Activated CD8-positive, alpha-beta T cell treated with anti-CD3 and anti-CD28 coated beads, Interleukin-2, amount 10 ng/mL, durations not matched to agents 7 days and 5 days (primary cell): ENCODE measurements at regions of chr10 and their contacts with region 1.

Region 1: GRCh38 chr10:109773288-109774120 is 149.8 kb downstream of the XPNPEP1 start:
- DNase-seq: no peak
- ATAC-seq: no peak
- H3K4me3 Mint-ChIP-seq: no peak overlapping the region
- H3K27ac Mint-ChIP-seq: no peak overlapping the region
- H3K4me1 Mint-ChIP-seq: no peaks in the 10 kb centered on the region
- H3K27me3 Mint-ChIP-seq: no peaks in the 10 kb centered on the region

Region 2: DNA sequence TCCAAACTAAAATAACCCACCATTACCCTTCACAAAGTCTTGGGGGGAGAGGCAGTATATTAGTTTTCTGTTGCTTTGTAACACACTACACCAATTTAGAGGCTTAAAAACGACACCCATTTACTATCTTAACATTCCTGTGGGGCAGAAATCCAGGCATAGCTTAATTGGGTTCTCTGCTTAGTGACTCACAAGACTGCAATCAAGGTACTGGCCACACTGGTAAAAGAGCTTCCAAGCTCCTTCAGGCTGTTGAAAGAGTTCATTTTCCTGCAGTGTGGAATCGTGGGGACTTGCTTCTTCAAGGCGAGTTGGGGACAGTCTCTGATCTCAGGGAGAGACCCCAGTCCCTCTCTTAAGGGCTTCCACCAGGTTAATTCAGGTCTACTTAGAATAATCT is 10.7 kb after region 1 on chr10:
- CTCF ChIA-PET with region 1: interaction called, 16 read pairs
- POLR2A ChIA-PET with region 1: no interaction called
- DNase-seq: no peak
- ATAC-seq: no peak
- H3K4me3 Mint-ChIP-seq: no peak overlapping the region
- H3K27ac Mint-ChIP-seq: no peak overlapping the region
- H3K4me1 Mint-ChIP-seq: no peaks in the 10 kb centered on the region
- H3K27me3 Mint-ChIP-seq: peaks cover 12% of the 10 kb centered on the region